Upper lobe of right lung (tissue), 1 donor: ENCODE measurements at regions of chr5 and their contacts with region 1.

Region 1: DNA sequence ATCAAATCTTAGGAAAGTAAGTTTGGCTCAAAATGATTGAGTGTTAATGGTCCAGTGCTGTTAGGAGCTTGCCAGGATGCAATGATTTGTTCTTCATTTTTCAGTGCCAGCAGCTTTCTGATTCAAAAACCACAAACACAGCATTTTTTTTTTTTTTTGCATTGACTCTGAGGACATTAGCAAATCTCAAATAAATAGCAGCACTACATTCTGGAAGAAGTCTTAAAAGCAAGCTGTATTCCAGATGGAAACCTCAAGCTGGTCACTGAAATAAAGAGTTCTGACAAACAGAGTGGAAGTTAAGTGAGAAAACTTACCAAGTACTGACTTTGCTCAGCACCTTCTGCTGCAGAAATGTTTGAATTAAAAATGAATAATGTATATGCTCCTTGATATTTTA is 1653.1 kb upstream of the CDH9 start:
- DNase-seq: no peak
- ATAC-seq: no peak
- H3K4me3 ChIP-seq: no peak overlapping the region
- H3K27ac ChIP-seq: no peak overlapping the region
- H3K4me1 ChIP-seq: no peaks in the 10 kb centered on the region
- H3K27me3 ChIP-seq: no peaks in the 10 kb centered on the region
- CTCF ChIP-seq: no peak

Region 2: GRCh38 chr5:28714907-28715698 is 23.6 kb after region 1 on chr5:
- intact Hi-C with region 1: loop called (anchors 2 kb)
- DNase-seq: no peak
- ATAC-seq: no peak
- H3K4me3 ChIP-seq: no peak overlapping the region
- H3K27ac ChIP-seq: no peak overlapping the region
- H3K4me1 ChIP-seq: no peaks in the 10 kb centered on the region
- H3K27me3 ChIP-seq: no peaks in the 10 kb centered on the region
- CTCF ChIP-seq: no peak

Region 3: GRCh38 chr5:28788954-28789353 is 97.4 kb after region 1 on chr5:
- intact Hi-C with region 1: no loop called
- DNase-seq: no peak
- ATAC-seq: no peak
- H3K4me3 ChIP-seq: no peak overlapping the region
- H3K27ac ChIP-seq: no peak overlapping the region
- H3K4me1 ChIP-seq: no peaks in the 10 kb centered on the region
- H3K27me3 ChIP-seq: no peaks in the 10 kb centered on the region
- CTCF ChIP-seq: no peak

Region 4: DNA sequence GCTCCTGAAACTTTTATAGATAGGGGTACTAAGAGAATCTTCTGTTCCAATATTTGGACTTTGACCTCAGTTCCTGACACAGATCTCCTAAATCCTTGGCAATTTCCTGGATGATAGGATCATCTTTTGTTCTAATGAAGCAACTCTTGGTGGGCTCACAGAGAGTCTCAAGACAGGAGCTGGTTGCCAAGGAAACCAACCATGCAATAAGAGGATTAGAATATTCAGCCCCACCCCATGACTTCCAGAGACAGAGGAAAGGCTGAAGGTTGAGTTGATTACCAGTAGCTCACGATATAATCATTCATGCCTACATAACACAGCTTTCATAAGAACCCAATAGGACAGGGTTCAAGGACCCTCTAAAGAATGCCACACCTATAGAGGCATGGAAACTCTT is 451.7 kb after region 1 on chr5:
- intact Hi-C with region 1: no loop called
- DNase-seq: no peak
- ATAC-seq: no peak
- H3K4me3 ChIP-seq: no peak overlapping the region
- H3K27ac ChIP-seq: no peak overlapping the region
- H3K4me1 ChIP-seq: no peaks in the 10 kb centered on the region
- H3K27me3 ChIP-seq: no peaks in the 10 kb centered on the region
- CTCF ChIP-seq: no peak